CD8-positive, alpha-beta memory T cell (primary cell): ENCODE measurements at regions of chr1 and their contacts with region 1.

Region 1: DNA sequence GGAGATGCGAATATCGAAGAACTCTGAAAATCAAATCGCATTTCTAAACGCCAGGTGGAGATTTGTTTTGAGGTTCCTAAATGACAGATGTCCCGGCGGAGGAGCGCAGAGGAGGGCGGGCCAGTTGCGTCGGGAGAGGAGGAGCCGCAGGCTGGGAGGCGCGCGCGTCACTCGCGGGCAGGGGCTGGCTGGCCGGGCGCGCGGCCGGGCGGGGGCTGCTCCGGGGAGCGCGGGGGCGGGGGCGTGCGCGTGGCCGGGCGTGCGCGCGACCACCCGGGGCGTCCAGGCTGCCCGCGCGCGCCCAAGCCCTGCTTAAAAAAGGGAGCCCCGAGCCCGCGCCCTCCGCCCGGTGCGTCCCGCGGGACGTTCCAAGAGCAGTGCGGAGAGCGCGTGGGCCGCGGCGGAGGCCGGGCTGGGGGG is 47.3 kb downstream of the H3-3A start:
- DNase-seq: peak; percentile 64 to 81 (median 73)
- H3K4me3 ChIP-seq: peak overlapping the region; percentile 56
- H3K4me3 Mint-ChIP-seq: peak overlapping the region; percentile 88 to 94 (median 92)
- H3K27ac ChIP-seq: peak overlapping the region; percentile 79
- H3K27ac Mint-ChIP-seq: peak overlapping the region; percentile 79 to 94 (median 90)
- H3K4me1 ChIP-seq: peaks cover 10% of the 10 kb centered on the region
- H3K4me1 Mint-ChIP-seq: peaks cover 12 to 20% (median 13%) of the 10 kb centered on the region in 3 donors
- H3K27me3 ChIP-seq: no peaks in the 10 kb centered on the region
- H3K27me3 Mint-ChIP-seq: peaks cover 0 to 3% of the 10 kb centered on the region in 2 donors

Region 2: GRCh38 chr1:226083302-226084101 is 26.3 kb before region 1 on chr1:
- CTCF ChIA-PET with region 1: interaction called, 9 read pairs
- POLR2A ChIA-PET with region 1: interaction called, 13 read pairs
- DNase-seq: peak; percentile 84 to 93 (median 92)
- H3K4me3 ChIP-seq: peak overlapping the region; percentile 68
- H3K4me3 Mint-ChIP-seq: peak overlapping the region; percentile 80 to 95 (median 89)
- H3K27ac ChIP-seq: no peak overlapping the region
- H3K27ac Mint-ChIP-seq: peak overlapping the region in 5 of 8 donors; percentile 20 to 91 (median 40)
- H3K4me1 ChIP-seq: peaks cover 9% of the 10 kb centered on the region
- H3K4me1 Mint-ChIP-seq: peaks cover 7 to 12% (median 10%) of the 10 kb centered on the region in 3 donors
- H3K27me3 ChIP-seq: no peaks in the 10 kb centered on the region
- H3K27me3 Mint-ChIP-seq: no peaks in the 10 kb centered on the region